A673 (cell line): ENCODE measurements at regions of chr5 and their contacts with region 1.

Region 1: DNA sequence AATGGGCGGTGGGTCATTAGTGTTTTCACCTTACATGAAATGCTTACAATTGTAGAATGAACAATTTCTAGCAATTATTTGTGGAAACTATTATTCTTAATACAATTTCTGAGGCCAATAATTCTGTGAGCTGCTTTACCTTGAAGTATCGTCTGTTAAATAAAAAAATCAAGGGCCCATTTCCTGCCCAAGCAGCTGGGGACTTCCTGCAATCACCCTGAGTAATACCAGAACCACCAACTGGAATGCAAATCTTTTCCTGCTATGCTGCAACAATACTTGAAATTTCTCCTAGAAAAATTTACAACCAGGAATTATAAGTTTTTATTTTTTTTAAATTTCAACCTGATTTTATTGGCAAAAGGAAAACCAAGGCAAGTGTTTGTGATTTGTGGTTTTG is 52.6 kb downstream of the ADAMTS16 start:
- DNase-seq: peak; percentile 95
- H3K4me3 ChIP-seq: no peak overlapping the region
- H3K27ac ChIP-seq: no peak overlapping the region
- H3K4me1 ChIP-seq: peaks cover 26% of the 10 kb centered on the region
- H3K27me3 ChIP-seq: peaks cover 47% of the 10 kb centered on the region
- CTCF ChIP-seq: no peak

Region 2: GRCh38 chr5:5239191-5239590 is 46.5 kb after region 1 on chr5:
- CTCF ChIA-PET with region 1: no interaction called
- POLR2A ChIA-PET with region 1: no interaction called
- intact Hi-C with region 1: loop called (anchors 2 kb)
- DNase-seq: peak; percentile 82
- H3K4me3 ChIP-seq: no peak overlapping the region
- H3K27ac ChIP-seq: peak overlapping the region; percentile 39
- H3K4me1 ChIP-seq: peaks cover 14% of the 10 kb centered on the region
- H3K27me3 ChIP-seq: no peaks in the 10 kb centered on the region
- CTCF ChIP-seq: no peak

Region 3: GRCh38 chr5:5270958-5271605 is 78.4 kb after region 1 on chr5:
- CTCF ChIA-PET with region 1: no interaction called
- POLR2A ChIA-PET with region 1: no interaction called
- intact Hi-C with region 1: loop called (anchors 5 kb)
- DNase-seq: peak; percentile 96
- H3K4me3 ChIP-seq: peak overlapping the region; percentile 31
- H3K27ac ChIP-seq: peak overlapping the region; percentile 66
- H3K4me1 ChIP-seq: peaks cover 18% of the 10 kb centered on the region
- H3K27me3 ChIP-seq: no peaks in the 10 kb centered on the region
- CTCF ChIP-seq: no peak

Region 4: GRCh38 chr5:5340206-5340729 is 147.6 kb after region 1 on chr5:
- CTCF ChIA-PET with region 1: no interaction called
- POLR2A ChIA-PET with region 1: interaction called, 3 read pairs
- intact Hi-C with region 1: loop called (anchors 2 kb)
- DNase-seq: peak; percentile 97
- H3K4me3 ChIP-seq: no peak overlapping the region
- H3K27ac ChIP-seq: peak overlapping the region; percentile 63
- H3K4me1 ChIP-seq: peaks cover 47% of the 10 kb centered on the region
- H3K27me3 ChIP-seq: no peaks in the 10 kb centered on the region
- CTCF ChIP-seq: peak; percentile 62